H1 (cell line): ENCODE measurements at regions of chr4 and their contacts with region 1.

Region 1: DNA sequence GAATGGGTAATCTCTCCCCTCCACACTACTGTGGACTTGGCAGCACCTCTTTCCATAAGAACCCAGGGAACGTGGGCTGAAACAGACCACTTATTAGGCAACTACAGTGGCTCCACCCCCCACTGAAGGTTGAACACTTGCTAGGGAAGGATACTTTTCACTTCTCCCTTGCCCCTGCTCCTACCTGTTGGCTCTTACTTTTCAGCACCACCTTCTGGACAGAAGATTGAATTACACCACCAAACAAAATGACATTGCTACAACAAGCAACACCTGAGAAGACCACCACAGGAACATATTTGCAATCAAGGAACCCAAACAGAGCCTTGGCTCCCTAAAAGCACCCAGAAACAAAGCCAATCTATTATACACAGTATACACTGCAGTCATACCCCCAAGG is 132.1 kb upstream of the CXCL13 start:
- DNase-seq: no peak
- H3K4me3 ChIP-seq: no peak overlapping the region
- H3K27ac ChIP-seq: no peak overlapping the region
- H3K4me1 ChIP-seq: no peaks in the 10 kb centered on the region; a peak in 1 of 7 replicates
- H3K27me3 ChIP-seq: no peaks in the 10 kb centered on the region
- CTCF ChIP-seq: peak in 2 of 3 experiments; percentile 63 to 66; a peak in 3 of 4 replicates
- EP300 ChIP-seq: no peak
- POLR2A ChIP-seq: no peak
- RAD21 ChIP-seq: peak; percentile 59 to 71

Region 2: GRCh38 chr4:77347341-77347966 is 126.1 kb before region 1 on chr4:
- CTCF ChIA-PET with region 1: interaction called, 11 read pairs
- POLR2A ChIA-PET with region 1: no interaction called
- DNase-seq: no peak
- H3K4me3 ChIP-seq: no peak overlapping the region
- H3K27ac ChIP-seq: no peak overlapping the region
- H3K4me1 ChIP-seq: peaks cover 0 to 6% (median 1%) of the 10 kb centered on the region in 4 experiments; a peak in 1 of 7 replicates
- H3K27me3 ChIP-seq: no peaks in the 10 kb centered on the region
- CTCF ChIP-seq: no peak
- EP300 ChIP-seq: no peak
- POLR2A ChIP-seq: no peak
- RAD21 ChIP-seq: no peak

Region 3: GRCh38 chr4:77385124-77385969 is 88.2 kb before region 1 on chr4:
- CTCF ChIA-PET with region 1: interaction called, 21 read pairs
- POLR2A ChIA-PET with region 1: no interaction called
- DNase-seq: peak; percentile 33 to 73
- H3K4me3 ChIP-seq: no peak overlapping the region
- H3K27ac ChIP-seq: no peak overlapping the region
- H3K4me1 ChIP-seq: peaks cover 0 to 4% (median 3%) of the 10 kb centered on the region in 4 experiments; a peak in 2 of 7 replicates
- H3K27me3 ChIP-seq: peaks cover 0 to 1% (median 0%) of the 10 kb centered on the region in 4 experiments; a peak in 1 of 7 replicates
- CTCF ChIP-seq: peak; percentile 61 to 93 (median 92)
- EP300 ChIP-seq: no peak
- POLR2A ChIP-seq: no peak
- RAD21 ChIP-seq: peak; percentile 89 to 91

Region 4: DNA sequence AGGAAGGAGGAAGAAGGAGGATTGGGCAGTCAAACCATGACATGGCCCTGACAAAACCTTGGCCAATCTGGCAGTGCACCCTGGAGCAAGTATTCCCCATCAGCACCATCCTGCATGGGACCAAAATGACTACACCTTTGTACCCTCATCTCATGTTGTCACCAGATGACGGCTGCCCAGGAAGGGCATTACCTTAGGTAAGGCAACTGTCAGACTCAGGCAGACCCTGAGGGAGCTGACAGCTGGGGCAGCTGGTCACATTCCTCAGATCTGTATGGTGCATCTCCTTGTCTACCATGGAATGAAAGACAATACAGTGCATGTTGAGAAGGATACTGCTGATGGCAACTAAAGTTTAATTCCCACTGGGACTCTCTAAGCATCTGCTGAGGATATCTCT is 12.2 kb after region 1 on chr4:
- CTCF ChIA-PET with region 1: interaction called, 22 read pairs
- POLR2A ChIA-PET with region 1: no interaction called
- DNase-seq: no peak
- H3K4me3 ChIP-seq: no peak overlapping the region
- H3K27ac ChIP-seq: no peak overlapping the region
- H3K4me1 ChIP-seq: no peaks in the 10 kb centered on the region
- H3K27me3 ChIP-seq: no peaks in the 10 kb centered on the region
- CTCF ChIP-seq: no peak
- EP300 ChIP-seq: no peak
- POLR2A ChIP-seq: no peak
- RAD21 ChIP-seq: no peak

Region 5: GRCh38 chr4:77493120-77493752 is 19.7 kb after region 1 on chr4:
- CTCF ChIA-PET with region 1: interaction called, 10 read pairs
- POLR2A ChIA-PET with region 1: no interaction called
- DNase-seq: no peak
- H3K4me3 ChIP-seq: no peak overlapping the region
- H3K27ac ChIP-seq: no peak overlapping the region
- H3K4me1 ChIP-seq: no peaks in the 10 kb centered on the region
- H3K27me3 ChIP-seq: no peaks in the 10 kb centered on the region
- CTCF ChIP-seq: no peak
- EP300 ChIP-seq: no peak
- POLR2A ChIP-seq: no peak
- RAD21 ChIP-seq: no peak

Region 6: GRCh38 chr4:77697860-77698590 is 224.5 kb after region 1 on chr4:
- CTCF ChIA-PET with region 1: interaction called, 17 read pairs
- POLR2A ChIA-PET with region 1: no interaction called
- DNase-seq: no peak
- H3K4me3 ChIP-seq: no peak overlapping the region
- H3K27ac ChIP-seq: no peak overlapping the region
- H3K4me1 ChIP-seq: peaks cover 0 to 9% (median 0%) of the 10 kb centered on the region in 4 experiments; a peak in 4 of 7 replicates
- H3K27me3 ChIP-seq: no peaks in the 10 kb centered on the region
- CTCF ChIP-seq: peak; percentile 54 to 77 (median 71)
- EP300 ChIP-seq: no peak
- POLR2A ChIP-seq: no peak
- RAD21 ChIP-seq: peak; percentile 79 to 84